CD14-positive monocyte (primary cell): ENCODE measurements at regions of chr7 and their contacts with region 1.

Region 1: DNA sequence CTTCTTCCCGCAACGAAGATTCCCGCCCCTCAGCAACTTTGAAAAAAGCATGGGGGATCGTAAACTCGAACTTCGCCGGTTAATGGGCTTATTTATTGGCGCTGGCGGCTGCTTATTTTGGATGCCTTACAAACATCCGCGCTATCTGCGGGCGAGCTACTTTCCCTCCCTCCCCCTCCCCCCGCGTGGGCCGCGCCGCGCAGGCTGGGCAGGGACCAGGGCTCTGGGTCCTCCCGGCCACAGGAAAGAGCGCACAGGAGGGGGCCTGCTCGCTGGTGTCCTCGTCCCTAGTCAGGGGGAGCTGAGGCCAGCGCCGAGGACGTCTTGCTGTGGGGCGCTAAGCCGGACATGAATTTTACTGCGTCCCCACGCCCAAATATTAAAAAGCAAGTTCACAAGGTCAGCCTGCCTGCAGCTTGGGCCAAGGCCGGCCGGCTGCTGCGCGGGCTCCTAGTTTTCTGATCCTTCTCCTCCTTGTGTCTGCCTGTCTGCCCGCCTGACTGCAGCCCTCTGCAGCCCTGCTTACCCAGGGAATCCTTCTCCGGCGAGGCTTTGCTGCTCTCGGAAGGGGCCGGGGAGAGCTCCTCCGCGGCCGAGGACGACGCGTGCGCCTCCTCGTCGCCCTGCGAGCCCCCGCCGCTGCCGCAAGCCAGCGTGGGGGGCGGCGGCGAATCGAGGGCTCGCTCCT is 1.2 kb downstream of the HOXA10 start:
- DNase-seq: no peak
- H3K4me3 ChIP-seq: peak overlapping the region; percentile 23 to 76 (median 39)
- H3K4me3 Mint-ChIP-seq: peak overlapping the region; percentile 74 to 89
- H3K27ac ChIP-seq: no peak overlapping the region
- H3K27ac Mint-ChIP-seq: no peak overlapping the region
- H3K4me1 ChIP-seq: peaks cover 44 to 62% of the 10 kb centered on the region in 2 donors
- H3K4me1 Mint-ChIP-seq: peaks cover 41% of the 10 kb centered on the region
- H3K27me3 ChIP-seq: peaks cover 65 to 98% of the 10 kb centered on the region in 2 donors
- H3K27me3 Mint-ChIP-seq: peaks cover 85 to 98% (median 91%) of the 10 kb centered on the region in 3 donors
- CTCF ChIP-seq: no peak

Region 2: GRCh38 chr7:25862260-25863037 is 1310.5 kb before region 1 on chr7:
- intact Hi-C with region 1: loop called (anchors 5 kb)
- DNase-seq: peak; percentile 70 to 87 (median 75)
- H3K4me3 ChIP-seq: peak overlapping the region in 2 of 3 experiments; percentile 6 to 69
- H3K4me3 Mint-ChIP-seq: peak overlapping the region in 1 of 2 donors; percentile 47
- H3K27ac ChIP-seq: no peak overlapping the region
- H3K27ac Mint-ChIP-seq: peak overlapping the region in 1 of 7 donors; percentile 46
- H3K4me1 ChIP-seq: peaks cover 21 to 22% of the 10 kb centered on the region in 2 donors
- H3K4me1 Mint-ChIP-seq: peaks cover 31% of the 10 kb centered on the region
- H3K27me3 ChIP-seq: peaks cover 95 to 100% of the 10 kb centered on the region in 2 donors
- H3K27me3 Mint-ChIP-seq: peaks cover 19 to 25% (median 23%) of the 10 kb centered on the region in 3 donors
- CTCF ChIP-seq: no peak

Region 3: DNA sequence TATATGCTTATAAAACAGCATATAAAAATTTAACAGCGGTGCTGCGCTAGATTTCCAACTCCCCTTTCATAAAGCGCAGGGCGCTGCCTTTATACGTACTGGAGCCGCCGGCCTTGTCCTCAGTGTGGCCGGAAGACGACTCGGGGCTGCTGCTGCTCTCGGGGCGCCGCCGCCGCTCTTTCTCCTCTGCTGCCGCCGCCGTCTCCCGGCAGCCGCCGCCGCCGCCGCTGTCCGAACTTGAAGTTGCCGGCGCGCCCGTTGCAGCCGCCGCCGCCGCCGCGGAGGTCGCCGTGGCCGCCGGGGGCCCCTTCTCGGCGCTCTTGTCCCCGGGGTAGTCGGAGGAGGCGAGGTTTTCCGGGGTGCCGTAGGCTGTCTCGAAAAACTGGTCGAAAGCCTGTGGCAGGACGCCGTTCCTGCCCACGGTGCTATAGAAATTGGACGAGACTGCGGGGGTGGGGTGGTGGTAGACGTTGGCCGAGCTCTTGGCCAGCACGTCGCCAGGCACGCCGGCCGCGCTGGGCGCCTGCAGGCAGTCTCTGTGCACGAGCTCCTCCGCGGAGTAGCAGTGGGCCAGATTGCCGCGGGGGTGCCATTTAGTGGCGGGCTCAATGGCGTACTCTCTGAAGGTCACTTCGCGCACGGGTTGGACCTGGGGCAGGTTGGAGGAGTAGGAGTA is 11.5 kb after region 1 on chr7:
- intact Hi-C with region 1: loop called in 1 of 2 experiments (anchors 1 kb)
- DNase-seq: peak in 1 of 3 donors; percentile 44
- H3K4me3 ChIP-seq: peak overlapping the region in 2 of 3 experiments; percentile 20 to 71
- H3K4me3 Mint-ChIP-seq: peak overlapping the region; percentile 72 to 93
- H3K27ac ChIP-seq: no peak overlapping the region
- H3K27ac Mint-ChIP-seq: peak overlapping the region in 1 of 7 donors; percentile 41
- H3K4me1 ChIP-seq: peaks cover 55 to 56% of the 10 kb centered on the region in 2 donors
- H3K4me1 Mint-ChIP-seq: peaks cover 62% of the 10 kb centered on the region
- H3K27me3 ChIP-seq: peaks cover 81 to 99% of the 10 kb centered on the region in 2 donors
- H3K27me3 Mint-ChIP-seq: peaks cover 94 to 99% (median 99%) of the 10 kb centered on the region in 3 donors
- CTCF ChIP-seq: no peak

Region 4: DNA sequence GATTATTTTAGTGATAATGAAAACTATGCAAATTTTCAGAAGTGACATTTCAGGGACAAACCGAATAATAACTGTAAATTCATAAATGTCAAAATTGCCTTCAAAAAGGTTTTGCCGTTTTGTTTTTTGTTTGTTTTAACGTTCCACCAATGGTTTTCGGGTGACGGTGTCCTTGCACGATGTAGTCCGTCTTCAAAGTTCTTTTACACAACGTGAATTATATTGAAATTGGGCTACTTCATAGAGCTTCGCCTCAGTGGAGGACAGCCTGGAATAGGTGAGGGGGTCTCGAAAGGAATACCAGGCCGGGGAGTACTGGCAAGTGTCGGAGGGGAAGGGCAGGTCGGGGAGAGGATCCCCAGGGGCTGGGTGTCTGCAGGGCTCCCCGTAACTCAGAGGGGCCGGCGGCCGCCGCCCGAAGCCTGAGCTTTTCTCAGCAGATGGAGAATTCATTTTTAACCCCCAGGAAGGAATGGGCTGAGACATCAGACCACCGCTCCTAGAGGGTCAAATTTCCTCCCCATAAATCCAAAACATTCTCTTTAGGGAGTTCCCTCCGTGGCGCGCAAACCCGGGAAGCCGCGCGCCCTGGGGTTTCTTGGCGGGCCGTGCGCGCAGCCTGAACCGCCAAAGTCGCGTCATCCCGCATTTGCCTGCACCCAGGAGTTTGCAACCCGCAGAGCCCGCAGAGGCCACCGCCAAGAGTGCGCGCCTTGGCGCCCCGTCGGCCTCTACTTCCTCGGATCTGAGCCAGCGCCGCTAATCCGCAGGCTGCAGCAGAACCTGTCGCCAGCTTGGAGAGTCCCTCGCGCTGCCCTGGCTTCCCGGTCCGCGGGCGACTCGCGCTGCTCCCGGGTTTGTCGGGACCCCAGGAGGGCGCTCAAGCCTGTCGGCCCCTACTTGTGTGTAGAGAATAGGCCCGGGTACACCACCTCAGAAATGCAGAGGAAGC is 52.3 kb after region 1 on chr7:
- intact Hi-C with region 1: no loop called
- DNase-seq: no peak
- H3K4me3 ChIP-seq: no peak overlapping the region
- H3K4me3 Mint-ChIP-seq: peak overlapping the region in 1 of 2 donors; percentile 82
- H3K27ac ChIP-seq: no peak overlapping the region
- H3K27ac Mint-ChIP-seq: peak overlapping the region in 1 of 7 donors; percentile 38
- H3K4me1 ChIP-seq: peaks cover 3 to 5% of the 10 kb centered on the region in 2 donors
- H3K4me1 Mint-ChIP-seq: peaks cover 2% of the 10 kb centered on the region
- H3K27me3 ChIP-seq: peaks cover 97 to 98% of the 10 kb centered on the region in 2 donors
- H3K27me3 Mint-ChIP-seq: peaks cover 75 to 95% (median 80%) of the 10 kb centered on the region in 3 donors
- CTCF ChIP-seq: no peak